GM10248 (cell line): ENCODE measurements at regions of chr3 and their contacts with region 1.

Region 1: DNA sequence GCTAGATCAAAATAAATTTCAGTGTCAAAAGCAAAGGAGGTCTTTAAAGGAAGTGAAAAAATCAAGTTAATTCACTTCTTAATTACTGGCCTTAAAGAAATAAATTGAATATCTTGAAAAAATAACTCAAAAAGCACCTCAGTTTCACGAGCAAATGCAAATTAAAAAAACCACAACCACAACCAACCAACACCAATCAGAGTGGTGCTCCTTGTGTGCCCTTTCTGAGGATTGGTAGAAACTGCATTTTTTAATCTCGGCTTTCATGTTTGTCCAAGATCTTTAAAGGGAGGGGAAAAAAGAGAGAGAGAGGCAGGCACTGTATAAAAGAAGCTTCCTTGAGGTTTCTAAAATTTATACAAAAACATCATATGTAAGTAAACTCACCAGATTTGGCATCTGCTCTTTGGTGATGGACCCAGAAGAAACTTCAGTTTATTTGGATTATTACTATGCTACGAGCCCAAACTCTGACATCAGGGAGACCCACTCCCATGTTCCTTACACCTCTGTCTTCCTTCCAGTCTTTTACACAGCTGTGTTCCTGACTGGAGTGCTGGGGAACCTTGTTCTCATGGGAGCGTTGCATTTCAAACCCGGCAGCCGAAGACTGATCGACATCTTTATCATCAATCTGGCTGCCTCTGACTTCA is at the start of gene GPR15:
- DNase-seq: no peak
- CTCF ChIP-seq: no peak

Region 2: DNA sequence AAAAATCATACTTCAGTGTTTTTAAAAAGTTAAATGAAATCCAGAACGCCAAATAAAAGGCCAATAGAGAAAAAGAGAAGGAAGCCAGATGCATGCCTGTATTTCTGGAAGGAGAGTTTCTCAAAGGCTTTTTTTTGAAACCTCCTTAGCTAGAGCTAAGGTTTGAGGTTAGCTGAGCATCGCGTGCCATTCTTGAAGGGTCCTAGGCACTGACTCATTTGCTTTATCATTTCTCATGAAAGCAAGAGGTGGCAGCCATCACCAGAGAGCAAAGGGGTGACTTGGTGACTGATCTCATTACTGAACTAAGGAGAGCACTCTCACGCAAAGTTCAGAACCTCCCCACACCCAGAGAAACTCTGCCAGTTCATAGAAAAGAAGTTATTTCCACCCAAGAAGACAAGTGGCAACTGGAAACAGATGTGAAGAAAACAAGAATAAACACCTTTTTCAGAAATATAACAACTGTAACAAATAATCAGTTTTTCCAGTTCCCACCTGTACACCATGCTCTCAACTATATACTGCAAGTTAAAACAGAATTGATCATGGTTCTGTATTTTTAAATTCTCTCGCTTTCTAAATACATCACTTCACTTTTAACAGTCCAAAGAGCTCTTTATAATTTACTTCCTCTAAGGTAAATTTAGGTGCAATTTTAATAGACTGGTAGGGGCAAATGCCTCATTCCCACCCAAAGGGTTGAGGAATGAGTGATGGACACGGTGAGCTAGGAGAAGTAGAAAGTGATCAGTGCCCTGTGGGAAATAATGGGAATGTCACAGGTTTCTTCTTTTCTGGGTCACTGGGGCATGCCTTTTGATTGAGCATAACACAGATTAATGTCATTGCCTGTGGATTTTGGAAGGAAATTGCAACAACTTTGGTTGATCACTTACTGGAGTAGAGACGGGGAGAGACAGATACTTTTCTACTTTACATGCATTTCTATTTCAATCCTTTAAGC is 24.7 kb after region 1 on chr3:
- CTCF ChIA-PET with region 1: interaction called, 13 read pairs
- POLR2A ChIA-PET with region 1: interaction called, 19 read pairs
- DNase-seq: peak; percentile 54
- CTCF ChIP-seq: no peak

Region 3: GRCh38 chr3:98563661-98564281 is 32.0 kb after region 1 on chr3:
- CTCF ChIA-PET with region 1: interaction called, 34 read pairs
- POLR2A ChIA-PET with region 1: interaction called, 22 read pairs
- DNase-seq: peak; percentile 36
- CTCF ChIP-seq: no peak